MCF 10A (cell line): ENCODE measurements at regions of chr10 and their contacts with region 1.

Region 1: GRCh38 chr10:11724938-11725776 is 17.0 kb upstream of the ECHDC3 start:
- DNase-seq: peak; percentile 72
- H3K4me3 Mint-ChIP-seq: no peak overlapping the region
- H3K27ac Mint-ChIP-seq: no peak overlapping the region
- H3K4me1 Mint-ChIP-seq: peaks cover 6% of the 10 kb centered on the region
- H3K27me3 Mint-ChIP-seq: peaks cover 17% of the 10 kb centered on the region
- CTCF ChIP-seq: peak; percentile 79

Region 2: DNA sequence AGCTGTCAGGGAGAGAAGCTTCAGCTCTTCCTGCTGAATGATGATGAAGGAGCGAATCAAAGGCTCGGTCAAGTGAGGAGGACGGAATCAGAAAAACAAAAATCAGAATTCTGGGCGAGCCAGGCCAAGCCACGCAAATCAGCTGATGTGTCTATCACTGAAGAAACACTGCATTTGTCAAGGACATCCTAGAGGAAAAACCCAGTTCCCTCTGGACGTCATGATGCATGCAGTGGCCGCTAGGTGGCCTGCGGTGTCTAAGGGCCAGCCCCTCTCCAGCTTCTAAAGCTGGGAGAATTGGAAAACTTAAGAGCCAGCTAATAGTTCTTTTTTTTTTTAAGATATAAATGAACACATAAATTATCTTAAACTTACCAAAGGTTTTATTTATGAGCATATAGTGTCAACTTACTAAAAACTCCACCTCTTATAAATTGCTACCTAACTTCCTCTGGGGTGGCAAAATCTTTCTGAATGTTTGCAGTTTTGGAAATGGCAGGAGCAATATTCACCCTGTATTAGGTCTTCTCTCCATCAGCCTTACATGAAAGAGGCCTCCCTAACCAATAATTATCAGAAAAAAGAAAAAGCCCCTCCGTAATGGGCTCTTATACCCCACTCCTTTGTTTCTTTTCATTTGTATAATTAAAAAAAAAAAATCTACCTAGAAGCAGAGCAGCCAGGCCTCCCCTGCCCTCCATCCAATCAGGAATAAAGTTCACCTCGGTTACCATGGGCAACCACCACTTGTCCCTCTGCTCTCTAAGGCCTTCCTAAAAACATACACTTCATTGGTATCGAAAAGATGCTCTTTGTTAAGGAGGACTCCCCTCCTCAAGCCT is 300.5 kb before region 1 on chr10:
- CTCF ChIA-PET with region 1: no interaction called
- POLR2A ChIA-PET with region 1: no interaction called
- intact Hi-C with region 1: loop called (anchors 5 kb)
- DNase-seq: peak; percentile 57
- H3K4me3 Mint-ChIP-seq: no peak overlapping the region
- H3K27ac Mint-ChIP-seq: no peak overlapping the region
- H3K4me1 Mint-ChIP-seq: no peaks in the 10 kb centered on the region
- H3K27me3 Mint-ChIP-seq: no peaks in the 10 kb centered on the region
- CTCF ChIP-seq: peak; percentile 78

Region 3: DNA sequence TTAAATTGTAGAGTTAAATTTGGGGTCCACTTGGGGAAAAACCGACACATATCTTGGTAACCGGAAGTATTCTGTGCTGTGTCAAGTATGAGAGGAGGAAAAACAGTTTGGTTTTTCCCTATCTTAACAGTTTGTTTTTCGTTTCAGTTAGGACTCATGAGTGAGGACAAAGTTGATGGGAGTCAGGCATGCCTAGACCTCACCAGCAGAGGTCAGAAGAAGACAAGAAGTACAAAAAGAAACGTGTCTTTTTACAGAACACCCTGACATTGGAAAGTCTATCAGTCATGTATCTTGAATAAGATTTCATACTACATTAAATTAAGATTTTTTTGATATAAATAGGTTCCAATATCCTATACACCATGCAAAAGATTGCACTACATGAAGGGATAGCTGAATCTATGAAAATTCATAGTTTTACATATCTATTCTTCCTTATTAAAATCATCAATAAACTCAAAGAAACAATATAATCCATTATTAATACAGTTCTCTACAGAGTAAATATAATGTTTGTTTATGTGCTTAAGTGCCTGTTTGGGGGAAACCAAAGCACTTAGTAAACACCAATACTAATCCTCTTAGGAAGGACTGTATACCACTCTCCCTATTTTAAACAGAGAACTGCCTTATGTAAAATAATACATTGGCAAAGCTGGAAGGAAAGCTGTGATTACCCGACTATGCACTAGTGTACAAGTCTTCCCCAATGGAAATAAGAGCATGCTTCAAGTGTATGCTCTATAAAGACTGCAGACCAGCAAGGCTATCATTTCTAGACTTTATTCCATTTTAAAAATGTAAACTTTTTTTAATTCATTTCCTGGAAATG is 209.3 kb before region 1 on chr10:
- CTCF ChIA-PET with region 1: interaction called, 48 read pairs
- POLR2A ChIA-PET with region 1: interaction called, 5 read pairs
- intact Hi-C with region 1: loop called (anchors 1 kb)
- DNase-seq: peak; percentile 72
- H3K4me3 Mint-ChIP-seq: no peak overlapping the region
- H3K27ac Mint-ChIP-seq: no peak overlapping the region
- H3K4me1 Mint-ChIP-seq: no peaks in the 10 kb centered on the region
- H3K27me3 Mint-ChIP-seq: no peaks in the 10 kb centered on the region
- CTCF ChIP-seq: peak; percentile 77

Region 4: DNA sequence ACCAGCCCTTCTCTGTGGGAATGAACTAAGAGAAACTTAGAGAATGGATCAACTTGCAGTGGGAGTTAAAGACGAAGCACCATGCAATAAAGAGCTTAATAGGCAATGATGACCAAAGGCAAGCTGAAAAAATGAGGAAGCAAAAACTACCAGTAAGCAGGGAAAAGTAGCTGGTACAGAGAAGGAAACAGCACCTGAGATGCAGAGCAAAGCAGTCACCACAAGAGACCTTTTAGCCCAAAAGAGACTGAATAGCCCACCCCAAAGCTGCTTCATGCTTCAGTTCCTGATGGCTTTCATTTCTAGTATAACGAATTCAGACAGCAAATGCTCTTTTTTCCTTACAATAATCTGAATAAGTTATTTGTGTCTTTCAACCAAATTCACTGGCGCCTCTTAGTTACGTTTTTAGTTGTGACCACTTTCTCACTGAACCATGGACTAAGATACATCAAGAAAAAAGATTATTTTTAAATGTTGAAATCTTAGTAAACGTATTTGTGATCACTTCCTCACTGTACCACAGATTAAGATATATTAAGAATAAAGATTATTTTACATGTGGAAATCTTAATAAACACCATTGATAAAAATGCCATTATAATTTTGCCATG is 189.7 kb before region 1 on chr10:
- CTCF ChIA-PET with region 1: interaction called, 12 read pairs
- POLR2A ChIA-PET with region 1: no interaction called
- intact Hi-C with region 1: no loop called
- DNase-seq: no peak
- H3K4me3 Mint-ChIP-seq: no peak overlapping the region
- H3K27ac Mint-ChIP-seq: no peak overlapping the region
- H3K4me1 Mint-ChIP-seq: peaks cover 21% of the 10 kb centered on the region
- H3K27me3 Mint-ChIP-seq: no peaks in the 10 kb centered on the region
- CTCF ChIP-seq: no peak

Region 5: GRCh38 chr10:11578802-11579255 is 146.3 kb before region 1 on chr10:
- CTCF ChIA-PET with region 1: no interaction called
- POLR2A ChIA-PET with region 1: no interaction called
- intact Hi-C with region 1: no loop called
- DNase-seq: no peak
- H3K4me3 Mint-ChIP-seq: no peak overlapping the region
- H3K27ac Mint-ChIP-seq: no peak overlapping the region
- H3K4me1 Mint-ChIP-seq: peaks cover 10% of the 10 kb centered on the region
- H3K27me3 Mint-ChIP-seq: no peaks in the 10 kb centered on the region
- CTCF ChIP-seq: no peak

Region 6: GRCh38 chr10:11697718-11698527 is 27.2 kb before region 1 on chr10:
- CTCF ChIA-PET with region 1: no interaction called
- POLR2A ChIA-PET with region 1: no interaction called
- intact Hi-C with region 1: no loop called
- DNase-seq: peak; percentile 11
- H3K4me3 Mint-ChIP-seq: no peak overlapping the region
- H3K27ac Mint-ChIP-seq: no peak overlapping the region
- H3K4me1 Mint-ChIP-seq: no peaks in the 10 kb centered on the region
- H3K27me3 Mint-ChIP-seq: no peaks in the 10 kb centered on the region
- CTCF ChIP-seq: no peak

Region 7: DNA sequence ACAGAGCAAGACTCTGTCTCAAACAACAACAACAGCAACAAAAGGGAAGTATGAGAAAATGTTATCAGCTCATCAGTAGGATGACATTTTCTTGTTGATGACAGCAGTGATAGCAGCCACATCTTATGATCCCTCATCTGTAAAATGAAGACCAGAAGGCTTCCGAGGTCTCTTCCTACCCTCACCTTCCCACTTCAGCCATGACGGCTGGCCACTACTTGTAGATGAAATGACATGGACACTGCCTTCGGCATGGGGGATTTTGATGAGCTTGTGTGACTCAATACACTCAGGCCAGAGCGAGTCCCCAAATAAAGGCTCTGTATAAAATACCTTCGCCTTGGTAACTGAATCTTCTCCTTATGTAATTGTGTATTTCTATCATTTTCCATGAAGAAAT is 23.7 kb after region 1 on chr10:
- CTCF ChIA-PET with region 1: no interaction called
- POLR2A ChIA-PET with region 1: no interaction called
- intact Hi-C with region 1: no loop called
- DNase-seq: no peak
- H3K4me3 Mint-ChIP-seq: no peak overlapping the region
- H3K27ac Mint-ChIP-seq: no peak overlapping the region
- H3K4me1 Mint-ChIP-seq: peaks cover 6% of the 10 kb centered on the region
- H3K27me3 Mint-ChIP-seq: no peaks in the 10 kb centered on the region
- CTCF ChIP-seq: no peak

Region 8: GRCh38 chr10:11901833-11902475 is 176.8 kb after region 1 on chr10:
- CTCF ChIA-PET with region 1: no interaction called
- POLR2A ChIA-PET with region 1: no interaction called
- intact Hi-C with region 1: no loop called
- DNase-seq: no peak
- H3K4me3 Mint-ChIP-seq: no peak overlapping the region
- H3K27ac Mint-ChIP-seq: peak overlapping the region; percentile 67
- H3K4me1 Mint-ChIP-seq: peaks cover 15% of the 10 kb centered on the region
- H3K27me3 Mint-ChIP-seq: no peaks in the 10 kb centered on the region
- CTCF ChIP-seq: no peak